Right lobe of liver (tissue), 6 donors: ENCODE measurements at regions of chr11 and their contacts with region 1.

Region 1: DNA sequence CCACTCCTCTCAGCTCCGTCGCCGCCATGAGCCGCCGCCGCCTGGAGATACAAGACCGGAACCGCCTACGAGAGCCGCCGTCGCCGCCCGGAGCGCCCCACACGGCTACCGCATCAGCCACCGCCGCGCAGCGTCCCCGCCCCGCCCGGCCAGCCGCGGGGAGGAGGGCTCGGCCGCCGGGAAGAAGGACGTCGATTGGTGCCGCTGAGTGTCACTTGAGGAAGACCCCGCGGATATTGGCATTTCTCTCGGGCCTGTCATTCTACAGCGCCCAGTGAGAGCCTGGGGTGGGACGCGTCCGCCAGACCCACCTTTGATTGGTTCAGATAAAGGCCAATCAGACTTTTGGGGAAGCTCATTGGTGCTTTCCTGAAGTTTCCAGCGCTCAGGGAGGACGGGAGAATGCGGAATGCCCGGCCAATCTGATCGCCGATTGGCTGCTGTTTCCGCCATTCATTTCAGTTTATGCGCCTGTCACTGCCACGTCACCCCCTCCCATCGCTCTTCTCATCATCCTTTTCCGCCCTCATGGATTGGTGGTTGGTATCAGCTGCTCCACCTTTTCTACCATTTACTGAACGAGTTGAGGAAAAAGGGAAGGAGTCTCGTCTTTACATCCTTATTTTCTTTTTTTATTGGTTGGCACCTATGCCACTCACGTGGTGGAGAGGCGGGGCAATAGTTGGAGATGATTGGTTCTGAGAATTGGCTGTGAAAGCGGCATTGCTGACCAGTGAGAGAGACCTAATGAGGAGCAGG is at the start of gene OSBP:
- DNase-seq: peak; percentile 98 to 100 (median 99)
- ATAC-seq: peak; percentile 81 to 92 (median 85)
- H3K4me3 ChIP-seq: peak within 1 kb of the TSS; percentile 74 to 85 (median 77)
- H3K27ac ChIP-seq: peak within 1 kb of the TSS; percentile 89 to 95 (median 90)
- H3K4me1 ChIP-seq: peaks cover 0 to 31% (median 14%) of the 10 kb centered on the region in 4 donors
- H3K27me3 ChIP-seq: no peaks in the 10 kb centered on the region
- CTCF ChIP-seq: no peak
- POLR2A ChIP-seq: peak; percentile 94
- total RNA-seq, gene OSBP: 44.9 to 65.4 (median 52.4) TPM

Region 2: DNA sequence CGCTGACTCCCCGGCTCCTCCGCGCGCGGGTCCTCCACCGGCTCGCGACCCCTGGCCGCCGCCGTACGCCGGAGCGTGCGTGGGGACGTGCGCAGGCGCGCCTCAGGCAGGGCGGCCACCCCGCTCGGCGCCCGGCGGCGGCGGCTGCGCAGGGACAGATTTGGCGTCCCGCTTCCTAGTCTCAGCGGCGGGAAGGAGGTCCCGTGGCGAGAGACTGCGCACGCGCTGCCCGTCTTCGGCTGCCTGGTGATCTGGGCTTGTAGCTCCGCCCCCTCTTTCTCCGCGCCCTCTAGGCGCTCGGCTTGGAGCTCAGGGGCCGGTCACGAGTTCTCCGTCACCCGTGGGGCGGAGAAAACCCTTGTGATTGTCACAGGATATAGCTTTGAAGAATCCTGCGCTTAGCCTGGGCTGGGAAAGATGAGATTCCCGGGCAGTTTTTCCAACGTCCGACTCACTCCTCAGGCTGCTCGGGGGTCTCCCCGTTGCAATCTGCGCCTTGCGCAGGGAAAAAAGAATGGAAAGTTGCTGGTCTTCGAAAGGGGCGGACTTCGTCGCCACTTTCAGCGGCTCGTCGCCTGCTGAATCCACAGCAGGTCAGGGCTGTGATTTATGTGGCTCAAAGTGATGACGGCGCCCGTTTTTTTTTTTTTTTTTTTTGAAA is 53.3 kb after region 1 on chr11 and contains the start of gene PATL1:
- intact Hi-C with region 1: loop called in 1 of 2 experiments (anchors 10 kb)
- DNase-seq: peak; percentile 100
- ATAC-seq: peak; percentile 85 to 95 (median 90)
- H3K4me3 ChIP-seq: peak within 1 kb of the TSS; percentile 68 to 78 (median 77)
- H3K27ac ChIP-seq: peak within 1 kb of the TSS; percentile 95 to 98 (median 98)
- H3K4me1 ChIP-seq: peaks cover 0 to 36% (median 16%) of the 10 kb centered on the region in 4 donors
- H3K27me3 ChIP-seq: no peaks in the 10 kb centered on the region
- CTCF ChIP-seq: no peak
- POLR2A ChIP-seq: peak; percentile 92
- total RNA-seq, gene PATL1: 13.8 to 27.6 (median 21.1) TPM

Region 3: GRCh38 chr11:59833602-59834001 is 217.8 kb after region 1 on chr11:
- intact Hi-C with region 1: no loop called
- DNase-seq: no peak
- ATAC-seq: no peak
- H3K4me3 ChIP-seq: no peak overlapping the region
- H3K27ac ChIP-seq: no peak overlapping the region
- H3K4me1 ChIP-seq: no peaks in the 10 kb centered on the region
- H3K27me3 ChIP-seq: no peaks in the 10 kb centered on the region
- CTCF ChIP-seq: no peak
- POLR2A ChIP-seq: no peak